ENCODE measurements at regions of chr15 and their contacts with region 1.

Region 1: DNA sequence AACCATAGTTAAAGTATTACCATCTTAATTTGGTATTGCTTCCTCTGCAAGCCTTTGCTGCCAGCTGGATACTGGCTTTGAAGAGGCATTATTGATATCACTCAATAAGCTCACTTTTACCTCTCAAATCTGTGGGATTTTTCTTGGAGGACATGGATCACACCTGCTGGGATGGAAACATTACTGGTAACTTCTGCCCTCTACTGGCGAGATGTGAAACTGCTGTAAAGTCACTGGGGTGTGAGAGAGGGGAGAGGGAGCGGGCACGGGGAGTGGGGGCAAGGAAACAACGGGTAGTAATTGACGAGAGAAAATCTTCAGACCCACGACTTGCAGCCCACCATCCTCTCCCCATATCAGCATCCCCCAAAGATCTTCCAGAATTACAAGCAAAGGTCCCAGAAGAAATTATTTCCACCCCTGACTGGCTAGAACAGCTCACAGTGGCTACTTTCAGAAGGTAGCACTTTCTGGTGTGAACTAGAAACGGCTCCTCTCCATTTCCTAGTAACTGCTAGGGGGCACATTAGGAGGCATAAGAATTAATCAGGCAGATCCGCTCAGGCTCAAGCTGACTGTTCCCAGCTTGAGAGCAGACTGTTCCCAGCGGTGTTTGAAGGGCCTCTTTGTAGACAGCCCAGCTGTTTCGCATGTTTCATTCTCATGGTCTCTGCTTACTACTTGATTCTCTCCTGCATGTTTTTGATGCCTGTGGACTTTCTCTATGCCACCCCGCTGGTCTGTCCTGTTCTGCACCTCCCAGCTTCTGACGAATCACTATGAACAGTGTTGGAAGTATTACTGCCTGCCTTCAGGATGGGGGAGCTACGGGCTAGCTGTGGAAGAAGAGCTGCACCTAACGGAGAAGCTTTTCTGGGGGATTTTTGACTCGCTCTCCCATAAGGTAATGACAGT is 230.4 kb upstream of the CHRM5 start:
- DNase-seq: peak; percentile 33
- ATAC-seq: peak; percentile 91
- H3K4me3 ChIP-seq: no peak overlapping the region
- H3K27ac ChIP-seq: no peak overlapping the region
- H3K4me1 ChIP-seq: no peaks in the 10 kb centered on the region
- H3K27me3 ChIP-seq: no peaks in the 10 kb centered on the region
- CTCF ChIP-seq: peak; percentile 92

Region 2: DNA sequence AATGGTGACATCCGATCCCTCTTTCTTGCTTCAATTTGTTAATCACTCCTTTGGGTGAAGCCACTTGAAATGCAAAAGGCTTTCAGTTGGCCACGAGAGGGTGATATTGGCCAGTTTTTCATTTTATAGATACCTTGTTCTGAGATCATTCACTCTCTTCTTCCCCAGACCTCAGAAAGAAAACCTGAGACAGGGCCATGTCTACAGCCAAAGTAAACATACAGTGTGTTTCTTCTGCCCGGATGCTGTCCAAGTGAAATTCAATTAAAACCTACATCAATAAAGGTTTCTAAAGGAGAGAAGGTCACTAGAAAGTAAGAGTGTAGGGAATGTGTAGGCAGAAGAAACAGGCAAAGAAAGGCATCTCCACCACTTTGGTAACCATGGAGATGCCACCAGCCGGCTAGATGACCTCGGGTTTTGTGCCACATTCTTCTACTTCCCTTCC is 503.9 kb before region 1 on chr15:
- CTCF ChIA-PET with region 1: no interaction called
- POLR2A ChIA-PET with region 1: no interaction called
- in situ Hi-C with region 1: no loop called
- intact Hi-C with region 1: loop called (anchors 5 kb)
- DNase-seq: no peak
- ATAC-seq: peak; percentile 89
- H3K4me3 ChIP-seq: no peak overlapping the region
- H3K27ac ChIP-seq: no peak overlapping the region
- H3K4me1 ChIP-seq: no peaks in the 10 kb centered on the region
- H3K27me3 ChIP-seq: 0 out of 2 replicates have a peak, but pooled peaks cover 3% of the 10 kb centered on the region
- CTCF ChIP-seq: peak; percentile 69

Region 3: DNA sequence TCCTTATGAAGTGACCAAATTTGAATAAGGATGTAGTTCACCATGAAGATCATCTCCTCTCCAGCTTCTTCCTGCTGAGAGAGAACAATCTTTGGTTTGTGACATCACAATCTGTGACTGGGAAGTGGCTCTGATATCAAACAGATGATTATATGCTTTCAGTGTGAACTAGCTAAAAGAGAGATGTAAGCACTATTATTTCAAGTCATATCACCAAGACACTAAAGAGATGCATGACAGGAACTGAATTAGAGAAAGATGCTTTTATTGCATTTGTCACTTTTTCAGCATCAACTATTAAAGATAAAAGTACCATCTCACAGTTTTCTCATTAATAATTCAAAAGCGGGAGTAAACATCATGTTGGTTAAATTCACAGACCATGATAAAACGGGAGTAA is 233.9 kb after region 1 on chr15:
- CTCF ChIA-PET with region 1: interaction called, 9 read pairs
- POLR2A ChIA-PET with region 1: no interaction called
- in situ Hi-C with region 1: no loop called
- intact Hi-C with region 1: loop called (anchors 5 kb)
- DNase-seq: no peak
- ATAC-seq: no peak
- H3K4me3 ChIP-seq: no peak overlapping the region
- H3K27ac ChIP-seq: no peak overlapping the region
- H3K4me1 ChIP-seq: no peaks in the 10 kb centered on the region; the same call in 1 of the 2 replicates
- H3K27me3 ChIP-seq: no peaks in the 10 kb centered on the region
- CTCF ChIP-seq: no peak

Region 4: GRCh38 chr15:33994005-33994615 is 256.2 kb after region 1 on chr15:
- CTCF ChIA-PET with region 1: no interaction called
- POLR2A ChIA-PET with region 1: no interaction called
- in situ Hi-C with region 1: no loop called
- intact Hi-C with region 1: loop called (anchors 5 kb)
- DNase-seq: no peak
- ATAC-seq: peak; percentile 86
- H3K4me3 ChIP-seq: no peak overlapping the region
- H3K27ac ChIP-seq: no peak overlapping the region
- H3K4me1 ChIP-seq: no peaks in the 10 kb centered on the region
- H3K27me3 ChIP-seq: no peaks in the 10 kb centered on the region
- CTCF ChIP-seq: peak; percentile 80